ENCODE measurements at regions of chr1 and their contacts with region 1.

Region 1: DNA sequence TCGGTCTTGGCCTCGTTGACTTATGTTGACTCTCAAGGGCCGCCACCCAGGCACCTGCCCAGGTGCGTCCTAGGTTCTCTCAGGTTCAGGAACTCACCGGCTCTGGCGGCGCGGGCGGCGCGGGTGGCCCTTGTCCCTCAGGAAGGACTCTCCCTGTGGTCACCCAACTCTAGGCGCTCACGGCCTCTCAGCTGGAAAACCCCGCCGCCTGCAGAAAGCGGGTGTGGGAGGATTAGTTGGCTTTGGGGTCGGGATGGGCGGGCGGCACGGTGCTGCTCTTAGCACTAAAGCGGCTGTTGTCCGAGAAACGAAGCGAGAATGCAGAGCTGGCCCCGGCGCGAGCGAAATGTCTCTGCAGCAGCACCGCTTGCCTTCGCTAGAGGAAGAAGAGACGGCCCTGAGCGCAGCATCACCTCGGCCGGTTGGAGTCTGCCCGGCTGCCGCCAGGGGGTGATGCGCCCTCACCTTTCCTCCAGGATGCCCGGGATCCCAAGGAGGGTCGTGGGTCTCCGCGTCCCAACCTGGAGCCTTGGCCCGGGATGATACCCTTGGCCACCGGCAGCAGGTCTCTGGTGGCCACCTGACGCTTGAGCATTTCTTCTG is 8.1 kb upstream of the TADA1 start:
- DNase-seq: peak; percentile 72
- ATAC-seq: peak; percentile 89
- H3K4me3 Mint-ChIP-seq: no peak overlapping the region
- H3K27ac Mint-ChIP-seq: no peak overlapping the region
- H3K4me1 Mint-ChIP-seq: peaks cover 18% of the 10 kb centered on the region
- H3K27me3 Mint-ChIP-seq: peaks cover 16% of the 10 kb centered on the region

Region 2: GRCh38 chr1:166902271-166902670 is 18.1 kb after region 1 on chr1:
- CTCF ChIA-PET with region 1: interaction called, 12 read pairs
- POLR2A ChIA-PET with region 1: no interaction called
- intact Hi-C with region 1: no loop called
- DNase-seq: no peak
- ATAC-seq: peak; percentile 55
- H3K4me3 Mint-ChIP-seq: no peak overlapping the region
- H3K27ac Mint-ChIP-seq: no peak overlapping the region
- H3K4me1 Mint-ChIP-seq: peaks cover 6% of the 10 kb centered on the region
- H3K27me3 Mint-ChIP-seq: peaks cover 2% of the 10 kb centered on the region